Naive thymus-derived CD4-positive, alpha-beta T cell (primary cell): ENCODE measurements at regions of chr6 and their contacts with region 1.

Region 1: DNA sequence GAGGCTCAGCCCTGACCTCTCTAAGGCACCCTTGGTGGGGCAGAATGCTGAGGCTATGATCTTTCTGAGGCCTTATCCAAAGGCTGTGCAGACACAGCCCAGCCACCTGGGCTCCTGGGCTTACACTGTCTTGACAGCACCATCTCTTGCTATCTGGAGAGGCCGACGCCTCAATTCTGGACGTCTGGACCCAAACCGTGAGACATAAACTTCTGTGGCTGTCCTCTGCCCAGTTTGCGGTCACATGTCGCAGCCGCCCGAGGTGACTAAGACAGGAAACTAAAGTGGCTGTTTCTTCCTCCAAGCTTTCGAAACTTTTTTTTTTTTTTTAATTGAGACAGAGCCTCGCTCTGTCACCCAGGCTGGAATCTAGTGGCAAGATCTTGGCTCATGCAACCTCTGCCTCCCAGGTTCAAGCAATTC is 49.3 kb downstream of the PRR18 start:
- DNase-seq: peak in 2 of 9 donors; percentile 20 to 21
- ATAC-seq: peak; percentile 84
- H3K4me3 ChIP-seq: no peak overlapping the region
- H3K4me3 Mint-ChIP-seq: peak overlapping the region in 9 of 10 donors; percentile 36 to 78 (median 75)
- H3K27ac ChIP-seq: no peak overlapping the region
- H3K27ac Mint-ChIP-seq: peak overlapping the region in 8 of 9 donors; percentile 75 to 99 (median 92)
- H3K4me1 ChIP-seq: peaks cover 8 to 22% of the 10 kb centered on the region in 2 donors
- H3K4me1 Mint-ChIP-seq: peaks cover 0 to 66% (median 42%) of the 10 kb centered on the region in 7 donors
- H3K27me3 ChIP-seq: no peaks in the 10 kb centered on the region
- H3K27me3 Mint-ChIP-seq: peaks cover 0 to 54% (median 34%) of the 10 kb centered on the region in 5 donors

Region 2: GRCh38 chr6:164795056-164795815 is 1463.6 kb before region 1 on chr6:
- CTCF ChIA-PET with region 1: no interaction called
- POLR2A ChIA-PET with region 1: no interaction called
- intact Hi-C with region 1: no loop called
- DNase-seq: no peak
- ATAC-seq: no peak
- H3K4me3 ChIP-seq: no peak overlapping the region
- H3K4me3 Mint-ChIP-seq: no peak overlapping the region
- H3K27ac ChIP-seq: no peak overlapping the region
- H3K27ac Mint-ChIP-seq: no peak overlapping the region
- H3K4me1 ChIP-seq: no peaks in the 10 kb centered on the region
- H3K4me1 Mint-ChIP-seq: no peaks in the 10 kb centered on the region
- H3K27me3 ChIP-seq: no peaks in the 10 kb centered on the region
- H3K27me3 Mint-ChIP-seq: no peaks in the 10 kb centered on the region

Region 3: DNA sequence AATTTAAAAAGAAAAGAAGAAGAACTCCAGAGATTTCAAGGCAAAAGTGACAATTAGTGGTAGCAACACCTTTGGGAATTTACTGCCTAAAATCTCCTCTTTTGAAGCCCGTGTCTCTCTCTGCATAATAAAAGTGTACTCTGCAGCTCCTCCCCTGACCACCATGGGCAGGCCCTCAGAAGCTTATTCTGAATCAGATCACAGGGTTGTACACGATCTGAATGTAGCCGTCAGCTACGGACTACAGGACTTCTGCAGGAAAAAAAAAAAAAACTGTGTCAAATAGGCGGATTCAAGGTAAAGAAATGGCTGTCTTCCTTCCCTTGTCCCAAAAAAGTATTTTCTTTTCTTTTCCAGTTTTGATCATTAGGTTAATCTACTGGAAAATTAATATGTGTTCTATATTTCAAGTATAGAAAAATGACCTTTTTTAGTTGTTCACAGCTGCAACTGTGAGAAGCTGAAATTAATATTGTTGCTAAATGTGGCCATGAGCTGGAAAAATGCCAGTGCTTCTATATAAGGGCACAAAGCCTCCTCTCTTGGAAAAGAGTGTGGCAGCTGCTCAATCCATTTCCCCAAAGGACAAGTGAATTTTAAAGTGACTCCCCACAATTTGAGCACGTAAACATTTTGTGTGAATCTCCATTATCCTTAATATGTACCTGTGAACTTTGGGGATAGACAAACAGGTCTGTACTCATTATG is 1346.8 kb before region 1 on chr6:
- CTCF ChIA-PET with region 1: no interaction called
- POLR2A ChIA-PET with region 1: no interaction called
- intact Hi-C with region 1: no loop called
- DNase-seq: no peak
- ATAC-seq: no peak
- H3K4me3 ChIP-seq: no peak overlapping the region
- H3K4me3 Mint-ChIP-seq: no peak overlapping the region
- H3K27ac ChIP-seq: no peak overlapping the region
- H3K27ac Mint-ChIP-seq: no peak overlapping the region
- H3K4me1 ChIP-seq: no peaks in the 10 kb centered on the region
- H3K4me1 Mint-ChIP-seq: no peaks in the 10 kb centered on the region
- H3K27me3 ChIP-seq: no peaks in the 10 kb centered on the region
- H3K27me3 Mint-ChIP-seq: no peaks in the 10 kb centered on the region

Region 4: GRCh38 chr6:166173281-166173951 is 85.4 kb before region 1 on chr6:
- CTCF ChIA-PET with region 1: no interaction called
- POLR2A ChIA-PET with region 1: no interaction called
- intact Hi-C with region 1: loop called in 1 of 2 experiments (anchors 5 kb)
- DNase-seq: no peak
- ATAC-seq: no peak
- H3K4me3 ChIP-seq: no peak overlapping the region
- H3K4me3 Mint-ChIP-seq: no peak overlapping the region
- H3K27ac ChIP-seq: no peak overlapping the region
- H3K27ac Mint-ChIP-seq: no peak overlapping the region
- H3K4me1 ChIP-seq: peaks cover 0 to 3% of the 10 kb centered on the region in 2 donors
- H3K4me1 Mint-ChIP-seq: peaks cover 0 to 5% (median 4%) of the 10 kb centered on the region in 7 donors
- H3K27me3 ChIP-seq: peaks cover 0 to 5% of the 10 kb centered on the region in 2 donors
- H3K27me3 Mint-ChIP-seq: peaks cover 18 to 28% (median 25%) of the 10 kb centered on the region in 5 donors

Region 5: GRCh38 chr6:166192136-166192535 is 66.7 kb before region 1 on chr6:
- CTCF ChIA-PET with region 1: no interaction called
- POLR2A ChIA-PET with region 1: no interaction called
- intact Hi-C with region 1: no loop called
- DNase-seq: no peak
- ATAC-seq: no peak
- H3K4me3 ChIP-seq: no peak overlapping the region
- H3K4me3 Mint-ChIP-seq: no peak overlapping the region
- H3K27ac ChIP-seq: no peak overlapping the region
- H3K27ac Mint-ChIP-seq: no peak overlapping the region
- H3K4me1 ChIP-seq: no peaks in the 10 kb centered on the region
- H3K4me1 Mint-ChIP-seq: no peaks in the 10 kb centered on the region
- H3K27me3 ChIP-seq: no peaks in the 10 kb centered on the region
- H3K27me3 Mint-ChIP-seq: peaks cover 0 to 30% (median 7%) of the 10 kb centered on the region in 5 donors

Region 6: DNA sequence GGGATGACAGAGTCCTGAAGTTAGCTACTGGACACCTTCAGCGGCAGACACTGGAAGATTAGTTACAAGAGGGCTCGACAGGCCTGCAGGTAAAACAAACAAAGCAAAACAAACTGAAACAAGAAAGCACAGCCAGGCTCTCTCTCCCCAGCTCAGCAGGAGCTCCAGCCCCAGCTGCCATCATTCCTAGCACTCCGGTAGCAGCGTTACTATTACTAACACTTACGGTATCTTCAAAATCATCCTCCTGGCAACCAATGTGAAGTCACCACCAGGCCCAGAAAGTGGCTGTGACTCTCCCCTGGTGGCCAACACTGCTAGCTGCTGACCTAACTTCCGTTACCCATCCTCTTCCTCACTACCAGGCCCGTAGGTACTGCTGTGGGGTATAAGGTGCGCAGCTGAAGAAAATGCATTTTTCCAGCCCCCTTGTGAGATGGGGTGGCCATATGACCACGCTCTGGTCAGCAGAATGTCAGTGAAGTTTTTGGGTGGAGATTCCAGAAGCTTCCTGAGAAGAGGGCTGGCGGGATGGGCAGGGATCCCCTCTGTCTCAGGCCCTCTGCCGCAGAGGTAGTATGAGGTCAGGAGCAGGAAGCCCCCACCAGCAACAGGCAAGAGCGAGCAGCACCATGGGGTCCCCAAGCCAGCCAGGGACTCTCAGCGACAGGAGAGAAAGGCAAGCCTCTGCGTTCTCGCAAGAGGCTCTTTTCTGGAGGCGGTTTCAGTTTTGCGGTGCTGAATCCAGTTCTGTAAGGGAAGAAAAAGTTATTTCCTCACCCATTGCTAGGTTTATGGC is 53.8 kb before region 1 on chr6:
- CTCF ChIA-PET with region 1: no interaction called
- POLR2A ChIA-PET with region 1: no interaction called
- intact Hi-C with region 1: no loop called
- DNase-seq: no peak
- ATAC-seq: no peak
- H3K4me3 ChIP-seq: no peak overlapping the region
- H3K4me3 Mint-ChIP-seq: no peak overlapping the region
- H3K27ac ChIP-seq: no peak overlapping the region
- H3K27ac Mint-ChIP-seq: no peak overlapping the region
- H3K4me1 ChIP-seq: no peaks in the 10 kb centered on the region
- H3K4me1 Mint-ChIP-seq: peaks cover 0 to 20% (median 6%) of the 10 kb centered on the region in 7 donors
- H3K27me3 ChIP-seq: no peaks in the 10 kb centered on the region
- H3K27me3 Mint-ChIP-seq: peaks cover 0 to 51% (median 21%) of the 10 kb centered on the region in 5 donors

Region 7: GRCh38 chr6:166244353-166245045 is 14.4 kb before region 1 on chr6:
- CTCF ChIA-PET with region 1: interaction called, 3 read pairs
- POLR2A ChIA-PET with region 1: interaction called, 7 read pairs
- intact Hi-C with region 1: loop called in 1 of 2 experiments (anchors 2 kb)
- DNase-seq: peak in 1 of 9 donors; percentile 6
- ATAC-seq: peak; percentile 76
- H3K4me3 ChIP-seq: peak overlapping the region; percentile 38
- H3K4me3 Mint-ChIP-seq: peak overlapping the region; percentile 69 to 90 (median 80)
- H3K27ac ChIP-seq: no peak overlapping the region
- H3K27ac Mint-ChIP-seq: peak overlapping the region; percentile 12 to 82 (median 77)
- H3K4me1 ChIP-seq: peaks cover 4 to 21% of the 10 kb centered on the region in 2 donors
- H3K4me1 Mint-ChIP-seq: peaks cover 8 to 38% (median 22%) of the 10 kb centered on the region in 7 donors
- H3K27me3 ChIP-seq: no peaks in the 10 kb centered on the region
- H3K27me3 Mint-ChIP-seq: peaks cover 0 to 60% (median 5%) of the 10 kb centered on the region in 5 donors

Region 8: GRCh38 chr6:166969390-166970002 is 710.6 kb after region 1 on chr6:
- CTCF ChIA-PET with region 1: no interaction called
- POLR2A ChIA-PET with region 1: no interaction called
- intact Hi-C with region 1: loop called in 1 of 2 experiments (anchors 10 kb)
- DNase-seq: peak in 4 of 9 donors; percentile 31 to 70 (median 54)
- ATAC-seq: peak; percentile 68
- H3K4me3 ChIP-seq: no peak overlapping the region
- H3K4me3 Mint-ChIP-seq: peak overlapping the region; percentile 55 to 87 (median 74)
- H3K27ac ChIP-seq: peak overlapping the region; percentile 62
- H3K27ac Mint-ChIP-seq: peak overlapping the region; percentile 71 to 94 (median 87)
- H3K4me1 ChIP-seq: peaks cover 6 to 27% of the 10 kb centered on the region in 2 donors
- H3K4me1 Mint-ChIP-seq: peaks cover 16 to 74% (median 20%) of the 10 kb centered on the region in 7 donors
- H3K27me3 ChIP-seq: no peaks in the 10 kb centered on the region
- H3K27me3 Mint-ChIP-seq: no peaks in the 10 kb centered on the region